CD4-positive, alpha-beta T cell (primary cell): ENCODE measurements at regions of chr12 and their contacts with region 1.

Region 1: GRCh38 chr12:43882578-43883178 is 46.8 kb downstream of the TMEM117 start:
- DNase-seq: peak in 9 of 14 experiments; percentile 4 to 75 (median 19)
- ATAC-seq: peak; percentile 88
- H3K4me3 ChIP-seq: no peak overlapping the region
- H3K4me3 Mint-ChIP-seq: no peak overlapping the region
- H3K27ac ChIP-seq: no peak overlapping the region
- H3K27ac Mint-ChIP-seq: no peak overlapping the region
- H3K4me1 ChIP-seq: no peaks in the 10 kb centered on the region
- H3K4me1 Mint-ChIP-seq: no peaks in the 10 kb centered on the region
- H3K27me3 ChIP-seq: no peaks in the 10 kb centered on the region
- H3K27me3 Mint-ChIP-seq: no peaks in the 10 kb centered on the region
- CTCF ChIP-seq: peak; percentile 86

Region 2: DNA sequence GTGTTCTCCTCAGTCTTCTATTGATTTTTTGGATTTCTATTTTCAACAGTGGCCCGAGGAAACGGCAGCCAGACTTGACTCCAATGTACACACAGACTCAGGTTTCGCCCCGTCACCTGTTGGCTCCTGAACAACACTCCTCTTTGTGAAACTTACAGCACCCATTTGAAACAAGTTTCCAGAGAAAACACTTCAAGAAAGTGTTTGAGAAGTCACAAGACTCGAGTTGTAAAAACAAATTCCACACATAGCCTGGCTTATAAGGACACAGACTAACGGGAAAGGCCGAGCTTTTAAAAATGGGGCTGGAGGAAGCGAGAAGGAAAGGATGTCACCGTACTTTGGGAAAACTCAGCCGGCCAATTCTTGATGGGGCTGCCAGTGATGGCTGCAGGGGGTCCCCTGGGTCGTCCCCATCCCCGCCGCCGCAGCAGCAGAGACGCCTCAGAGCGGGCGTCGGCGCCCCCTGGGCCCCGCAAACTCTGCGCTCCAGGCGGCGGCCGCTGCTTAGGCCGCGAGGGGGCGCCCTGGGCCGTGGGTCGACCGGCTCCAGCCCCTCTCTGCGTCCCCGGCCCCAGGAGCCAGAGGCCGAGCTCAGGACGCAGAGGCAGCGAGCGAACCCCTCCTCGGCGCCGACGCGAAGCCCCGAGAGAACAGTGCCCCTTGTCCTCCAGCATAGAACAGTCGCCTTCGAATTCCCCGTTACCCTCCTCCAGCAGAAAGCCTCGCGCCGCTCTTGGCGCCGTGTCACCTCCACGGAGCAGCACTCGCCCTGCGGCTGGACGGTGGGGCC is 1400.0 kb before region 1 on chr12:
- CTCF ChIA-PET with region 1: no interaction called
- POLR2A ChIA-PET with region 1: no interaction called
- intact Hi-C with region 1: loop called in 1 of 2 experiments (anchors 5 kb)
- DNase-seq: peak in 11 of 14 experiments; percentile 4 to 65 (median 29)
- ATAC-seq: peak; percentile 58
- H3K4me3 ChIP-seq: peak overlapping the region; percentile 52
- H3K4me3 Mint-ChIP-seq: peak overlapping the region; percentile 79
- H3K27ac ChIP-seq: no peak overlapping the region
- H3K27ac Mint-ChIP-seq: no peak overlapping the region
- H3K4me1 ChIP-seq: peaks cover 14% of the 10 kb centered on the region
- H3K4me1 Mint-ChIP-seq: peaks cover 11% of the 10 kb centered on the region
- H3K27me3 ChIP-seq: peaks cover 34 to 70% of the 10 kb centered on the region in 2 experiments
- H3K27me3 Mint-ChIP-seq: peaks cover 89% of the 10 kb centered on the region
- CTCF ChIP-seq: peak; percentile 50

Region 3: DNA sequence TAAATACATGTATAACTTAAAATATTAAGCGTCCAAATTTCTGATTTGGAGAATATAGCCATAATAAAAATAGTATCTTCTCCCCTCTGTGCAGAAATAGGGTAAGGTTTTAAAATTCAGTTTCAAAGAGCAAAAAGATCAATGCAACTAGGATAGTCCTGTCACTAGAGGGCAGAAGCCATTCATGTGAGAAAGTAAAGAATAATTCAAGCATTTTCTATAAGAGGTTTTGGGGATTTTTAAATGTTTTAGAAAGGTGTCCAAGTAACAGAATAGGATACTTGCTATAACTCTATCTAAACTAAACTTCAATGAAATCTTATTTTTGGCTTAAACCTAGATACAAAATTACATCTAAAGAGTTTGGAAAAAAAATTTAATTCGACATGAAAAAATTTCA is 381.0 kb before region 1 on chr12:
- CTCF ChIA-PET with region 1: no interaction called
- POLR2A ChIA-PET with region 1: no interaction called
- intact Hi-C with region 1: loop called in 1 of 2 experiments (anchors 5 kb)
- DNase-seq: no peak
- ATAC-seq: no peak
- H3K4me3 ChIP-seq: no peak overlapping the region
- H3K4me3 Mint-ChIP-seq: no peak overlapping the region
- H3K27ac ChIP-seq: no peak overlapping the region
- H3K27ac Mint-ChIP-seq: no peak overlapping the region
- H3K4me1 ChIP-seq: no peaks in the 10 kb centered on the region
- H3K4me1 Mint-ChIP-seq: no peaks in the 10 kb centered on the region
- H3K27me3 ChIP-seq: no peaks in the 10 kb centered on the region
- H3K27me3 Mint-ChIP-seq: no peaks in the 10 kb centered on the region
- CTCF ChIP-seq: no peak

Region 4: GRCh38 chr12:43776498-43776897 is 106.2 kb before region 1 on chr12:
- CTCF ChIA-PET with region 1: interaction called, 50 read pairs
- POLR2A ChIA-PET with region 1: interaction called, 12 read pairs
- intact Hi-C with region 1: loop called (anchors 1 kb)
- DNase-seq: peak in 5 of 14 experiments; percentile 7 to 64 (median 43)
- ATAC-seq: peak; percentile 82
- H3K4me3 ChIP-seq: no peak overlapping the region
- H3K4me3 Mint-ChIP-seq: no peak overlapping the region
- H3K27ac ChIP-seq: no peak overlapping the region
- H3K27ac Mint-ChIP-seq: no peak overlapping the region
- H3K4me1 ChIP-seq: no peaks in the 10 kb centered on the region
- H3K4me1 Mint-ChIP-seq: peaks cover 8% of the 10 kb centered on the region
- H3K27me3 ChIP-seq: no peaks in the 10 kb centered on the region
- H3K27me3 Mint-ChIP-seq: no peaks in the 10 kb centered on the region
- CTCF ChIP-seq: peak; percentile 50

Region 5: DNA sequence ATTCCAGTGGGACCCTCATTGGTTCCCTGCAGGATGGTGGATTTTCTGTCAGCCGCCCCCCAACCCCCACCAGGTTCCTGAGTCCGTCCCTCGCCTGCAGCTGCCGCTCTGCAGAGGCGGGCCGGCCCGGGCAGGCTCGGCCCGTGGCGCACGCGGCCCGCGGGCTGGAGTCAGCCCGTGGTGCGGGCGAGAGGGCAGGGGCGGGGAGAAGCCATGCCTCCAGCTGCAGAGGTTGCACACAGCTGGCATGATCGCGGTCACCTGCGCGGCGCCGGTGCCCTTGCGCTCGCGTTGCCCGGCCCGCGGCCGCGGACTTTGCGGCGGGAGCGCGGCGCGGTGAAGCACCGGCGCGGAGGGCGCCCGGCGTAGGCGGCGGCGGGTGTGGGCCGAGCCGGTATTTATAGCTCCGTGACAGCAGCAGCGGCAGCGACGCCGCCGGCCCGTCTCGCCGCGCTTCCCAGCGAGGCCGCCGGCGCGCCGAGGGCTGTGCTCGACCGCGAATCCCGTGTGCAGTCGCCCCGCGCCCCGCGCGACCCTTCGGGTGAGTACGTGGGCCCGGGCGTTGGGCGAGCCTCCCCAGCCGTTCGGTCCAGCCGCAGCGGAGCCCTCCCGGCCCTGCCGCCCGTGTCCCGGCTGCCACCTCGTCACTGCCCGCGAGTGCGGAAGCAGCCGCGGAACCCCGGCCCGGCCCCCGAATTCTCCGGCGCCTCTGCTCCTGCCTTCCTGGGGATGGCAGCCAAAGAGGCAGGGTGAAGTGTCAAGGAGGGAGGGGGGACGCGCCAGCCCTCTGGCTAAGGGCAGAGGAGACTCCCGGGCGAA is 46.8 kb before region 1 on chr12 and contains the start of gene TMEM117:
- CTCF ChIA-PET with region 1: interaction called, 3 read pairs
- POLR2A ChIA-PET with region 1: no interaction called
- intact Hi-C with region 1: loop called in 1 of 2 experiments (anchors 5 kb)
- DNase-seq: peak; percentile 40 to 78 (median 55)
- ATAC-seq: peak; percentile 69
- H3K4me3 ChIP-seq: peak within 1 kb of the TSS; percentile 64
- H3K4me3 Mint-ChIP-seq: peak within 1 kb of the TSS; percentile 89
- H3K27ac ChIP-seq: peak within 1 kb of the TSS; percentile 73 to 79
- H3K27ac Mint-ChIP-seq: peak within 1 kb of the TSS; percentile 84
- H3K4me1 ChIP-seq: peaks cover 38% of the 10 kb centered on the region
- H3K4me1 Mint-ChIP-seq: peaks cover 62% of the 10 kb centered on the region
- H3K27me3 ChIP-seq: no peaks in the 10 kb centered on the region
- H3K27me3 Mint-ChIP-seq: no peaks in the 10 kb centered on the region
- CTCF ChIP-seq: no peak
- total RNA-seq, gene TMEM117: 3.4 to 4.4 TPM